ENCODE measurements at regions of chr1 and their contacts with region 1.

Region 1: DNA sequence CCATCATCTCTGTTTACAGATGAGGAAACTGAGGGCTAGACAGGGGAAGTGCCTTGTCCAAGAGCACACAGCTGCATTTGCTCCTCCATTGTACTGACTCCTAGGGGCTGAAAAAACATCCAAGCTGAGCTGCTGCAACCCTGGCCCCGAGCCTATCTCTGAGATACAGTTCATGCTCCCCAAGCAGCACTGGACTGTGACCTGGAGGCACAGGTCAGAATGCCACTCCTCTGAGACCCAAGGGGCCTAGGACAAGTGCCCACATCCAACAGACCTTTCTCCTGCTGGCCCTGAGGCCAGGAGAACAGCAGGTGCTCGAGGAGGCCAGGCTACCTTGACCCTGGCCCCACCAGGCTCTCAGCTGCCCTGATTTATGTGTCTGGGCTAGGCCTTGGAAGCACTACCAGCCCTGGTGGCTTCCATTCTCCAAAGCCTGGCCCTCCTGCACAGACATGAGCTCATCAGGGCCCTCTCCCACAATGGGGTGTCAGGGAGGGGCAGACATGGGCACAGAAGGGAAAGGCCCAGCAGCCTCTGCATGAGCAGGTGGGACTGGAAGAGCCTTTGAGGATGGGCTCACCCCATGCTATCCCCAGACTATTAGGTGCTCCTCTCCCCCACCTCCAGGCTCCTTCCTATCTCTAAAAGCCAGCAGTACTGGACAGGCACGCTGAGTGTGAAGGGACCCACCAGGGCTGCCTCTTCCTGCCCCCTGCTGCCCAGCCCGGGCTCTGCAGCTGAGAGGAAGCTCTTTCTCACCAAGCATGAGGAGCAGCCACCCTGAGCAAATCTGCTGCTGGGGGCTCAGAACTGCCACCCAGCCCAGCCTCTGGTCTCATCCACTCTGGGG is 18.8 kb downstream of the ADGRB2 start:
- DNase-seq: peak in 2 of 3 donors; percentile 71 to 72
- H3K4me3 ChIP-seq: no peak overlapping the region
- H3K27ac ChIP-seq: no peak overlapping the region
- H3K4me1 ChIP-seq: peaks cover 0 to 18% (median 9%) of the 10 kb centered on the region in 4 experiments
- H3K27me3 ChIP-seq: no peaks in the 10 kb centered on the region

Region 2: GRCh38 chr1:31663622-31664452 is 81.5 kb before region 1 on chr1:
- CTCF ChIA-PET with region 1: interaction called, 23 read pairs
- POLR2A ChIA-PET with region 1: no interaction called
- DNase-seq: peak; percentile 14 to 38 (median 15)
- H3K4me3 ChIP-seq: no peak overlapping the region
- H3K27ac ChIP-seq: no peak overlapping the region
- H3K4me1 ChIP-seq: no peaks in the 10 kb centered on the region
- H3K27me3 ChIP-seq: no peaks in the 10 kb centered on the region

Region 3: GRCh38 chr1:31733389-31734219 is 11.7 kb before region 1 on chr1:
- CTCF ChIA-PET with region 1: interaction called, 14 read pairs
- POLR2A ChIA-PET with region 1: no interaction called
- DNase-seq: no peak
- H3K4me3 ChIP-seq: no peak overlapping the region
- H3K27ac ChIP-seq: no peak overlapping the region
- H3K4me1 ChIP-seq: no peaks in the 10 kb centered on the region
- H3K27me3 ChIP-seq: peaks cover 0 to 3% (median 0%) of the 10 kb centered on the region in 5 experiments

Region 4: DNA sequence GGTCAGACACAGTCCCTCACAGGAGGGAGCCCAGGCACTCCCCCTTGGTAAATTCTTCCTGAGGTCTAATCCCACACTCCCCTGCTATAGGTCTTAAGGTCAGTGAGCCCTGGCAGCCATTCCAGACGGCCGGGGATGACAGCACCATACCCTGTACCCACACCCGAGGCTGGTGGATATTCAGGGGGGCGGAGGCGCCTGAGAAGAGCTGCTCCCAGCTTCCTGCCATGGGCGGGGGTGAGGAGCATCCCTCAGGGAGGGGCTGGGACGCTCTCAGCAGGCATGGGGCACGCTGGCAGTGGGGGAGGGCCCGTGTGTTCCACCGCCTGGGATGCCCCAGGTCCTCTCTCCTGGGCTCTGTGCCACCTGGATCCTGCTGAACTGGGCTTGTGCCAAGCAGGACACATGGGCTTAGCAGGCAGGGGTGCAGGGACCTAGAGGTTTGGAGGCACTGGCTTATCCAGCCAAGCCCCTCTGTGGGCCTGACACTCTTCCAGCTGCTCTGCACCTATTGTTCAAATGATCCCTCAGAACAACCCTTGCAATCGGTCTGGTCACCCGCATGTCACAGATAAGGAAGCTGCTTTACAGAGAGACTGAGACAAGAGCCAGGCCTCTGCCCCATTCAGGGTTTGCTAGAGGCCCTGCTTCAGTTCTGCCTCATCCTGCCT is 24.5 kb after region 1 on chr1:
- CTCF ChIA-PET with region 1: no interaction called
- POLR2A ChIA-PET with region 1: no interaction called
- DNase-seq: no peak
- H3K4me3 ChIP-seq: no peak overlapping the region
- H3K27ac ChIP-seq: no peak overlapping the region
- H3K4me1 ChIP-seq: peaks cover 1 to 28% (median 19%) of the 10 kb centered on the region in 4 experiments
- H3K27me3 ChIP-seq: peaks cover 0 to 49% (median 41%) of the 10 kb centered on the region in 5 experiments

Region 5: DNA sequence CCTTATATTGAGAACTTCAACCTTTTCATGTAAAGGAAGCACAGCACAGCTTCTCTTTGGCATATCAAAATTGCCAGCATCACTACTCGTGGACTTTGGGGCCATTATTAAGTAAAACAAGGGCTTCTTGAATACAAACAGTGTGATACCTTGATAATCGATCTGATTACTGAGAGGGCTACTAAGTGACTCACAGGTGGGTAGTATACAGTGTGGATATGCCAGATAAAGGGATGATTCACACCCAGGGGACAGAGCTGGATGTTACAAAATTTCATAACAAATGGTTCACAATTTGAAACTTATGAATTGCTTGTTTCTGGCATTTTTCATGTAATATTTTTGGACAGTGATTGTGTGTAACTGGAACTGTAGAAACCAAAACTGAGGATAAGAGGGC is 562.0 kb after region 1 on chr1:
- CTCF ChIA-PET with region 1: no interaction called
- POLR2A ChIA-PET with region 1: no interaction called
- DNase-seq: no peak
- H3K4me3 ChIP-seq: no peak overlapping the region
- H3K27ac ChIP-seq: no peak overlapping the region
- H3K4me1 ChIP-seq: no peaks in the 10 kb centered on the region
- H3K27me3 ChIP-seq: no peaks in the 10 kb centered on the region